ENCODE measurements at regions of chr17 and their contacts with region 1.

Region 1: DNA sequence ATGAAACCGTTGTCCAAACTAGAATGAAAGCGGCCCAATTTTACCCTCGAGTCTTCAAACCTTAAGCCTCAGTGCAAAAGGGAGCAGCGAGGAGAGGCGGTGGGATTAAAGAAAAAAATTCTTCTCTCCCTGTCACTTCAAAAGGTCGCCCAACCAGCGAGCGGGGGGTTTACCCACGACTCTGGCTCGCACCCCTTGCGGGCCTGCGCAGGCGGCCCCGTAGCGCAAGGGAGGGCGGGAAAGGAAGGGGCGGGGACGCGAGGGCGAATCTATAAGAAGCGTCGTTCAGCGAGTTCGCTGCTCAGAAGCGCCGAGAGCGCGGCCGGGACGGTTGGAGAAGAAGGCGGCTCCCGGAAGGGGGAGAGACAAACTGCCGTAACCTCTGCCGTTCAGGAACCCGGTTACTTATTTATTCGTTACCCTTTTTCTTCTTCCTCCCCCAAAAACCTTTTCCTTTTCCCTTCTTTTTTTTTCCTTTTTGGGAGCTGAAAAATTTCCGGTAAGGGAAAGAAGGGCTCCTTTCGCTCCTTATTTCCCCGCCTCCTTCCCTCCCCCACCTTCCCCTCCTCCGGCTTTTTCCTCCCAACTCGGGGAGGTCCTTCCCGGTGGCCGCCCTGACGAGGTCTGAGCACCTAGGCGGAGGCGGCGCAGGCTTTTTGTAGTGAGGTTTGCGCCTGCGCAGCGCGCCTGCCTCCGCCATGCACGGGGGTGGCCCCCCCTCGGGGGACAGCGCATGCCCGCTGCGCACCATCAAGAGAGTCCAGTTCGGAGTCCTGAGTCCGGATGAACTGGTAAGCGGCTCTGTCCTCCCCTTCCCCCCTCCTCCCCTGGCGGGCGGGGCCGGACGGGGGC is at the start of gene POLR2A:
- DNase-seq: peak; percentile 95
- H3K4me3 Mint-ChIP-seq: peak within 1 kb of the TSS; percentile 93
- H3K27ac Mint-ChIP-seq: peak within 1 kb of the TSS; percentile 100
- H3K4me1 Mint-ChIP-seq: peaks cover 70% of the 10 kb centered on the region
- H3K27me3 Mint-ChIP-seq: no peaks in the 10 kb centered on the region
- total RNA-seq, gene POLR2A: 204 to 205 TPM

Region 2: GRCh38 chr17:7252176-7253043 is 231.9 kb before region 1 on chr17 and contains the start of gene ELP5:
- CTCF ChIA-PET with region 1: no interaction called
- intact Hi-C with region 1: loop called (anchors 1 kb)
- DNase-seq: peak; percentile 93
- H3K4me3 Mint-ChIP-seq: peak within 1 kb of the TSS; percentile 86
- H3K27ac Mint-ChIP-seq: peak within 1 kb of the TSS; percentile 99
- H3K4me1 Mint-ChIP-seq: peaks cover 34% of the 10 kb centered on the region
- H3K27me3 Mint-ChIP-seq: no peaks in the 10 kb centered on the region
- total RNA-seq, gene ELP5: 52.4 to 53.5 TPM

Region 3: GRCh38 chr17:7435221-7435675 is 49.0 kb before region 1 on chr17 and contains the start of gene TMEM102:
- CTCF ChIA-PET with region 1: interaction called, 23 read pairs
- intact Hi-C with region 1: loop called (anchors 1 kb)
- DNase-seq: peak; percentile 99
- H3K4me3 Mint-ChIP-seq: peak within 1 kb of the TSS; percentile 92
- H3K27ac Mint-ChIP-seq: peak within 1 kb of the TSS; percentile 91
- H3K4me1 Mint-ChIP-seq: peaks cover 36% of the 10 kb centered on the region
- H3K27me3 Mint-ChIP-seq: peaks cover 12% of the 10 kb centered on the region
- total RNA-seq, gene TMEM102: 3.3 to 3.5 TPM

Region 4: GRCh38 chr17:7548585-7549400 is 64.5 kb after region 1 on chr17 and contains the start of gene TNFSF12:
- CTCF ChIA-PET with region 1: no interaction called
- intact Hi-C with region 1: loop called (anchors 2 kb)
- DNase-seq: peak; percentile 69
- H3K4me3 Mint-ChIP-seq: peak within 1 kb of the TSS; percentile 77
- H3K27ac Mint-ChIP-seq: peak within 1 kb of the TSS; percentile 33
- H3K4me1 Mint-ChIP-seq: peaks cover 47% of the 10 kb centered on the region
- H3K27me3 Mint-ChIP-seq: no peaks in the 10 kb centered on the region
- total RNA-seq, gene TNFSF12: 5.8 to 7.4 TPM

Region 5: GRCh38 chr17:7614422-7615264 is 130.3 kb after region 1 on chr17 and contains the start of gene FXR2:
- CTCF ChIA-PET with region 1: no interaction called
- intact Hi-C with region 1: loop called (anchors 1 kb)
- DNase-seq: peak; percentile 100
- H3K4me3 Mint-ChIP-seq: peak within 1 kb of the TSS; percentile 83
- H3K27ac Mint-ChIP-seq: peak within 1 kb of the TSS; percentile 84
- H3K4me1 Mint-ChIP-seq: peaks cover 32% of the 10 kb centered on the region
- H3K27me3 Mint-ChIP-seq: no peaks in the 10 kb centered on the region
- total RNA-seq, gene FXR2: 29.7 to 36.8 TPM

Region 6: GRCh38 chr17:7931709-7932482 is 447.6 kb after region 1 on chr17 and contains the starts of genes CNTROB and TRAPPC1:
- CTCF ChIA-PET with region 1: no interaction called
- intact Hi-C with region 1: loop called (anchors 5 kb)
- DNase-seq: peak; percentile 100
- H3K4me3 Mint-ChIP-seq: peak within 1 kb of the TSS; percentile 91
- H3K27ac Mint-ChIP-seq: peak within 1 kb of the TSS; percentile 87
- H3K4me1 Mint-ChIP-seq: peaks cover 38% of the 10 kb centered on the region
- H3K27me3 Mint-ChIP-seq: no peaks in the 10 kb centered on the region
- total RNA-seq, gene CNTROB: 49.3 to 56.3 TPM
- total RNA-seq, gene TRAPPC1: 162 to 172 TPM

Measured in activated naive CD4-positive, alpha-beta T cell treated with anti-CD3 and anti-CD28 coated beads for 36 hours (primary cell).